ENCODE measurements at regions of chr5 and their contacts with region 1.

Region 1: GRCh38 chr5:102865510-102866236 is 110.6 kb downstream of the PAM start:
- DNase-seq: peak; percentile 75 to 91
- ATAC-seq: peak; percentile 96 to 98 (median 96)
- H3K4me3 ChIP-seq: peak overlapping the region; percentile 84
- H3K27ac ChIP-seq: peak overlapping the region; percentile 92
- H3K4me1 ChIP-seq: peaks cover 44% of the 10 kb centered on the region
- H3K27me3 ChIP-seq: no peaks in the 10 kb centered on the region
- CTCF ChIP-seq: no peak

Region 2: GRCh38 chr5:102754767-102755431 is 110.8 kb before region 1 on chr5 and contains the start of gene PAM:
- intact Hi-C with region 1: loop called in 1 of 2 experiments (anchors 10 kb)
- DNase-seq: peak; percentile 82 to 90
- ATAC-seq: peak; percentile 87 to 91 (median 88)
- H3K4me3 ChIP-seq: peak within 1 kb of the TSS; percentile 94
- H3K27ac ChIP-seq: peak within 1 kb of the TSS; percentile 97
- H3K4me1 ChIP-seq: peaks cover 31% of the 10 kb centered on the region
- H3K27me3 ChIP-seq: no peaks in the 10 kb centered on the region
- CTCF ChIP-seq: no peak
- total RNA-seq, gene PAM: 99.1 to 279 (median 191) TPM

Region 3: DNA sequence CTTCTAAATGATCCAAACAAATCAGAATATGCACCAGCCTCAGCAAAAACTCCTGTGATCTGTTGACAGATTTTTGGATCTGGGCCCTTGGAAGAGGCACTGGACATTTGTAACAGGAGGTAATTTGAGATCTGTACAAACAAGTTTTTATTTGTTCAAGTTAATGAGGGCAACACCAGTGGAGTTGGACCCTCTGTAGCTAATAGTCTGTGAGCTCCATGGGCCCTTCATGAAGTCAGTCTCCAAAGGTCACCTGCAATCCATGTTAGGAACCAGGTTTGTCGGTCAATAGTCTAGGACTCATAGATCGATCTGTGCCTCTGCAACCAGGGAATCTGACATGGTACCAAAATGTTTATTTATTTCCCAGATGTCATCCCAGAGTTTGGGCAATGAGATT is 69.7 kb before region 1 on chr5:
- intact Hi-C with region 1: loop called (anchors 5 kb)
- DNase-seq: no peak
- ATAC-seq: peak; percentile 66 to 83 (median 70)
- H3K4me3 ChIP-seq: peak overlapping the region; percentile 52
- H3K27ac ChIP-seq: peak overlapping the region; percentile 91
- H3K4me1 ChIP-seq: peaks cover 61% of the 10 kb centered on the region
- H3K27me3 ChIP-seq: no peaks in the 10 kb centered on the region
- CTCF ChIP-seq: no peak

Region 4: DNA sequence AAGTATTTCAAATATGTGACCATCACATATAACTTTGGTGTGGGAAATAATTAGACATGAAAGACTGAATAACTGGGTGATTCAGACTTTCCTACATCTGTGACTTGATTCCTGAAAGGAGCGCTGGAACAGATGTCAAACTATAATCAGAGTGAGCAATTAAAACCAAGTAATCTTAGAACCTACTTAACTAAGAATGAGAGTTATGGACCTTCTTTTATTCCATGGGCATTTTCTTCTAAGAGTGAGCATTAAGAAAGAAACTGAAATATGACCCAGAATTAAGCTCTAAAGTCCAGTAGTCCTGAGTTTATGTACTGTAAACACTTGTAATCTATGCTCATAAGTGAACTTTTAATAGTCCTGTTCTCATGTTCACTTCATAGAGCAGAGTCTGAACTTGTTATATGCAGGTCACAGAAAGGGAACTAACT is 42.2 kb before region 1 on chr5:
- intact Hi-C with region 1: loop called in 1 of 2 experiments (anchors 5 kb)
- DNase-seq: no peak
- ATAC-seq: peak in 3 of 4 donors; percentile 59 to 69 (median 68)
- H3K4me3 ChIP-seq: no peak overlapping the region
- H3K27ac ChIP-seq: peak overlapping the region; percentile 34
- H3K4me1 ChIP-seq: peaks cover 28% of the 10 kb centered on the region
- H3K27me3 ChIP-seq: no peaks in the 10 kb centered on the region
- CTCF ChIP-seq: no peak

Region 5: DNA sequence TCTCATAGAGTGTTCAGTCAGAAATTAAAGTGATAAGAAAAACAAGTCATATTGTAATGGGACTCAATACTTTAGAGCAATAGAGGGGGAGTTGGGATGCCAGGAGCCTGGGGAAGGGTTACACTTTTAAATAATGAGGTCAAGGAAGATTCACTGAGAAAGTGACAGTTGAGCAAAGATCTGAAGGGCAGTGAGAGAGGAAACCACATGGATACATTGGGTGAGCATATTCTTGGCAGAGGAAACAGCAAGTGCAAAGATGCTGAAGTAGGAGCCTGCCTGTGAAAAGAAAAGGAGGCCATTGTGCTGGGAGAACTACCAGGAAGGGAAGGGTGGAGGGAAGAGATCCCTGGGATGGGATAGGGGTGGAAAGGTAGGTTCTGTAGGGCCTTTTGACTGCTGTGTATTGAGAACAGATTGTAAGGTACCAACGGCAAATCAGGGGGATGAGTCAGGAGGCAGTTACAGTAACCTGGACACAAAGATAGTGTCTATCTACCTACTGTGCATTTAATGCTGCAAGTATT is 31.2 kb before region 1 on chr5:
- intact Hi-C with region 1: no loop called
- DNase-seq: no peak
- ATAC-seq: peak in 1 of 4 donors; percentile 23
- H3K4me3 ChIP-seq: no peak overlapping the region
- H3K27ac ChIP-seq: no peak overlapping the region
- H3K4me1 ChIP-seq: peaks cover 32% of the 10 kb centered on the region
- H3K27me3 ChIP-seq: no peaks in the 10 kb centered on the region
- CTCF ChIP-seq: no peak

Region 6: GRCh38 chr5:103774721-103775120 is 909.0 kb after region 1 on chr5:
- intact Hi-C with region 1: no loop called
- DNase-seq: no peak
- ATAC-seq: no peak
- H3K4me3 ChIP-seq: no peak overlapping the region
- H3K27ac ChIP-seq: no peak overlapping the region
- H3K4me1 ChIP-seq: no peaks in the 10 kb centered on the region
- H3K27me3 ChIP-seq: peaks cover 0 to 1% (median 0%) of the 10 kb centered on the region in 3 donors
- CTCF ChIP-seq: no peak